IMR-90 (cell line): ENCODE measurements at regions of chr1 and their contacts with region 1.

Region 1: DNA sequence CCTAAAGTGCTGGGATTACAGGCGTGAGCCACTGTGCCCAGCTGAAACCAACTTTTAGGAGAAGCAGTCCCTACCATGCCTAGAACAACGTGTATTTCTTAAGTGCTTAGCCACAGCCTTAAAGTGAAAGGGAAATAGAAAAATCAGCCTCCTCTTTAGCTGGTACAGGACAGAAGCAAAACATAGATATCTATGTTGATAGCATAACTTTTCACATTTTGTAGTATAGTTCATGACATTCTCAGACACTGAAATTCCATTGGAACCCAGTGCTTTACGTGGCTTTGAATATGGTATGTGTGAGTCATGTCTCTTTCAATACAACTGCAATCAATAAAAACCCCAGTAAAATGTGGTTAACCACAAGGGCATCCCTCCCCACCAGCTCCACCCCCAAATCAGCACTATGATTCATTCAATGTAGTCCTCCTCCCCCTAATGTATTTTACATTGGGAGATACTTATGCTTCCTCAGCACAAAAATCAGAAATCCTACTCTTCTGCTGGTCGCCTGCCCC is 32.1 kb downstream of the TGFB2 start:
- DNase-seq: peak; percentile 99
- ATAC-seq: peak; percentile 83
- H3K4me3 ChIP-seq: no peak overlapping the region
- H3K27ac ChIP-seq: peak overlapping the region; percentile 65
- H3K4me1 ChIP-seq: peaks cover 15% of the 10 kb centered on the region
- H3K27me3 ChIP-seq: no peaks in the 10 kb centered on the region
- CTCF ChIP-seq: no peak
- POLR2A ChIP-seq: no peak
- RAD21 ChIP-seq: 0 out of 2 replicates have a peak, but pooled peaks have one; percentile 13

Region 2: DNA sequence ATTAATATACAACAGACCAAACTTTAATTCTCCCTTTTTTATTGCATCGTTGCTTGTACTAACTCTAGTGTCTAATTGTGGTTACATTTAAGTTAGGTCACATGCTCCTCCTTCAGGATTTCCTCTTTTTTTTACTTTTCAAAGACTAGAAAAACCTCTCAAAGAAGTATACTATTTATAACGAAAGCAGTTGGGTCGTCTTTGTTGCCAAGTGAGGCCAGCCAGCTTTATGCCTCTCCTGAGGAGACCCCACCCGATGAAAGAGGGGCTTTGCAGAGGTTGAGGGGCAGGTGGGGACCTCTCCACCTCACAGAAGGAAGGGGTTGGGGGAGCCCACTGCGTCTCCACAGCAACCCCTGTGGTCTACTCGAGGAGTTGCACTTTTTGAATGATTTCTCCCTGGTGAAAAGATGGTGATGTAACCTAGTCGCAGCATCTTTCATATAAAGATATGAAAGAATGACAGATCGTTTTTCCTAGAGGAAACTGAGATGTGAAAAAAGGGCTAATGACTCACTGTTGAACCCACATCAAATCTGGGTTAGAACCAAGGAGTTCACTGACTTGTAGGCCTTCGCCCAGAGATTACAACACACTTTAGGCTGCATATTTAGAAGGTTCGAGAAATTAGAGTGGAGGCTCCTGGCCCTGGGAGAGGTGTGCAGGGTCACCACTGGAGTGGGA is 25.7 kb before region 1 on chr1:
- CTCF ChIA-PET with region 1: no interaction called
- POLR2A ChIA-PET with region 1: interaction called, 13 read pairs
- dilution Hi-C with region 1: no loop called
- in situ Hi-C with region 1: no loop called
- intact Hi-C with region 1: no loop called
- DNase-seq: peak; percentile 66
- ATAC-seq: peak; percentile 44
- H3K4me3 ChIP-seq: peak overlapping the region; percentile 61
- H3K27ac ChIP-seq: peak overlapping the region; percentile 95
- H3K4me1 ChIP-seq: peaks cover 6% of the 10 kb centered on the region
- H3K27me3 ChIP-seq: no peaks in the 10 kb centered on the region
- CTCF ChIP-seq: peak; percentile 59
- POLR2A ChIP-seq: no peak
- RAD21 ChIP-seq: no peak

Region 3: DNA sequence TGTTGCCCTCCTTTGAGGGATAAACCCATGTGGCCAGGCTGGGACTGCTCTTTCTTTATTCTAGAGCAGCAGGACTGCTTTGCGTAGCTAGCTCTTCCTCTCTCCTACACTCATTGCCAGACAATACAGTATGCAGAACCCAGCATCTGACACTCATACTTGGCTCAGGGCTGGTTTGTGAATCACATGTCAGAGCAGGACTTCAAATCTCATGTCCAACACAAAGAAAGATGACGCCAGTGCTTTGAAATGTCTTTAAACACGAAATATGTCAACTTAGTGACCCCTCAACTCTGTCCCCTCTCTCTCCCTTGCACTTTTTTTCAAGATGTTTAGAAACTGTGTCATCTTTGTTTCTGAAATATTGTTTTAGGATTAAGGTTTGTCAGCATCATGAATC is 102.9 kb after region 1 on chr1:
- CTCF ChIA-PET with region 1: interaction called, 7 read pairs
- POLR2A ChIA-PET with region 1: no interaction called
- dilution Hi-C with region 1: no loop called
- in situ Hi-C with region 1: no loop called
- intact Hi-C with region 1: loop called (anchors 5 kb)
- DNase-seq: peak; percentile 97
- ATAC-seq: peak; percentile 64
- H3K4me3 ChIP-seq: no peak overlapping the region
- H3K27ac ChIP-seq: peak overlapping the region; percentile 78
- H3K4me1 ChIP-seq: peaks cover 16% of the 10 kb centered on the region
- H3K27me3 ChIP-seq: no peaks in the 10 kb centered on the region
- CTCF ChIP-seq: no peak
- POLR2A ChIP-seq: peak; percentile 45; the same call in 1 of the 2 replicates
- RAD21 ChIP-seq: no peak